Activated T-helper 1 cell treated with anti-CD3 and anti-CD28 coated beads, Interleukin-12 subunit alpha, Interleukin-12 subunit beta, Interleukin-2, Interleukin-4 antibody, amounts not matched to agents 30 ng/mL and 10 ng/mL and 1 ng/mL, durations not matched to agents 14 hours and 24 hours and 36 hours (primary cell): ENCODE measurements at regions of chr6 and their contacts with region 1.

Region 1: DNA sequence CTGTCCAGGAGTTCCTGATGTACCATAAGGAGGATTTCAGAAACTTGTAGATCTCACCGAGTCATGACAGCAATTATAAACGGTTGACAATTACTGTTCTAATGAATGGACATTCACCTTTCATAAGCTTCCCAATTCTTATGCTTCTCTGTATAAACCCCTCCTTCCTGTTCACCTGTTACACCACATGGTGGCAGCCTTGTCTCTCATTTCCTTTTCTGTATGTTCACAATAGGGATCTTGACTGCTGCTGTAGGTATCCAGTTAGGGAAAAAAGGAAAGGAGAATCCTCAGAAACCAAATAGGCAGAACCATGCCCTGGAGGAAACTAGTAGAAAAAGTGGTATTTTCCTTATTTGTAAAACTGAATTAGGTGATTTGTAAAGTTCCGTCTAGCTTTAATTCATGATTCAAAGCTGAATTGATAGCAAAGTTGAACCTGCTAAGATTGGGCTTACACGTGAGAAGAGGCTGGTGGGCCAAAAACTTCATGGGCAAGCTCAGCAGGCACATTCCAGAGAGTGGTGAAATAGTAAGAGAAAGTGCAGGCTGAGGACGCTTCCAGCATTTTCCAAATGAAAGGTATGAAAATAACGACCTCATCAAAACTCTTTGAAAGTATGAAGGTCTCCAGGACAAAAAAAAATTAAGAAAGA is 29.0 kb upstream of the TBPL1 start:
- DNase-seq: peak; percentile 42
- H3K4me3 Mint-ChIP-seq: no peak overlapping the region
- H3K27ac Mint-ChIP-seq: no peak overlapping the region
- H3K4me1 Mint-ChIP-seq: no peaks in the 10 kb centered on the region
- H3K27me3 Mint-ChIP-seq: peaks cover 22% of the 10 kb centered on the region

Region 2: DNA sequence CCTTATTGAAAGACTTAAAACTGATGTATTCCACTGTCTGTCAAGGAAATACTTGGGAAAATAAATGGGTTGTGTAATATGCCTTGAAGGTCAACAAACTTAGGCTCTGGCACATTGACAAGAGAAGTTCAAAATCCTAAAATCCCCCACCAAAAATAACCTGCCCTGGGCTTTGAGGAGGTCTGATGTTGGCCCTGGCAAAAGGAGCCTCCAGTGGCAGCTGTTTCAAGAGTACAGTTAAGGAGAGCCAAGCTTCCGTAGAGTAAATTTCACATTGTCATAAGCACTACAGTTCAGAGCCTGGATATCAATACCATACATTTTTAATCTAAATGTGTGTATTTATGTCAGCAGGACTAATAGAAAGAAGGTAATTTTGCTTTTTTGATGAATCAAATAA is 400.2 kb before region 1 on chr6:
- intact Hi-C with region 1: no loop called
- DNase-seq: no peak
- H3K4me3 Mint-ChIP-seq: no peak overlapping the region
- H3K27ac Mint-ChIP-seq: no peak overlapping the region
- H3K4me1 Mint-ChIP-seq: no peaks in the 10 kb centered on the region
- H3K27me3 Mint-ChIP-seq: no peaks in the 10 kb centered on the region

Region 3: GRCh38 chr6:133568970-133569889 is 354.8 kb before region 1 on chr6:
- intact Hi-C with region 1: loop called (anchors 1 kb)
- DNase-seq: no peak
- H3K4me3 Mint-ChIP-seq: peak overlapping the region; percentile 55
- H3K27ac Mint-ChIP-seq: no peak overlapping the region
- H3K4me1 Mint-ChIP-seq: peaks cover 6% of the 10 kb centered on the region
- H3K27me3 Mint-ChIP-seq: peaks cover 16% of the 10 kb centered on the region

Region 4: DNA sequence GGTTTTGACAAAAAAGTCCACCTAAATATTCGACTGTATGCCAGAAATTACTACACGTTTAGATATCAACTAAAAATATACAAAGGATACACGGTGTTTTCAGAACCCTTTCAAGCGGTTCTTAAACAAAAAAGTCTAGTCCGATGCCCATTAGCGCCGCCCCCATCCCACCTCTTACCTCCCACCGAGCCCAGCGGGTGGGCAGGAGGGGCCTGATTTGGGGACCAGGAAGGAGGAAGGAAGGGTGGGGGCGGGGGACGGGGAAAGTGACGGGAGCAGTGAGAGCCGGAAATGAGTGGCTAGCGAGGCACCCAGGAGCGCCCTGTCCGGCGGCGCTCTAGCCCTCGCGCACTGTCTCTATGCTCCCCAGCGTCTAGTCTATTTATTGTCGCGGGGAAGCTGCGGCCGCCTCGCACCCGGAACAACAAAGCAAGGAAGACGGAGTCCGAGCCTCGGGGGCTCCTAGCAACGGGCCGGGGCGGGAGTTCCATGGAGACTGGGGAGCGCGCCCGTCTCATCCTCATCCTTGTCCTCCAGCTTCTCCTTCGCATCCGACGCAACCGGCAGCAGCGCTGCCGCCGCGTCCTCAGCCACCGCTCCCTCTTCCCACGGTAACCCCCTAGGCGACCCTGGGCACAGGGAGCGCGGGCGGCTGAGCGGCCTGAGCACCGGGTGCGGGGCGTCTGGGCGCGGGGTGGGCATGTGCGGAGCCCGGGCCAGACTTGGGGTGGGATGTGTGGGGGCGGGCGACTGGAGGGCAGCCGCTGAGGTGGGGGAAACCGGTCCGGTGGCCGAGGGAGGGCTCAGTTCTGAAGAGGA is 29.0 kb after region 1 on chr6 and contains the start of gene TBPL1:
- intact Hi-C with region 1: loop called (anchors 1 kb)
- DNase-seq: peak; percentile 76
- H3K4me3 Mint-ChIP-seq: peak within 1 kb of the TSS; percentile 95
- H3K27ac Mint-ChIP-seq: peak within 1 kb of the TSS; percentile 90
- H3K4me1 Mint-ChIP-seq: peaks cover 48% of the 10 kb centered on the region
- H3K27me3 Mint-ChIP-seq: peaks cover 10% of the 10 kb centered on the region
- total RNA-seq, gene TBPL1: 40.5 and 42.2 TPM in 2 replicates

Region 5: DNA sequence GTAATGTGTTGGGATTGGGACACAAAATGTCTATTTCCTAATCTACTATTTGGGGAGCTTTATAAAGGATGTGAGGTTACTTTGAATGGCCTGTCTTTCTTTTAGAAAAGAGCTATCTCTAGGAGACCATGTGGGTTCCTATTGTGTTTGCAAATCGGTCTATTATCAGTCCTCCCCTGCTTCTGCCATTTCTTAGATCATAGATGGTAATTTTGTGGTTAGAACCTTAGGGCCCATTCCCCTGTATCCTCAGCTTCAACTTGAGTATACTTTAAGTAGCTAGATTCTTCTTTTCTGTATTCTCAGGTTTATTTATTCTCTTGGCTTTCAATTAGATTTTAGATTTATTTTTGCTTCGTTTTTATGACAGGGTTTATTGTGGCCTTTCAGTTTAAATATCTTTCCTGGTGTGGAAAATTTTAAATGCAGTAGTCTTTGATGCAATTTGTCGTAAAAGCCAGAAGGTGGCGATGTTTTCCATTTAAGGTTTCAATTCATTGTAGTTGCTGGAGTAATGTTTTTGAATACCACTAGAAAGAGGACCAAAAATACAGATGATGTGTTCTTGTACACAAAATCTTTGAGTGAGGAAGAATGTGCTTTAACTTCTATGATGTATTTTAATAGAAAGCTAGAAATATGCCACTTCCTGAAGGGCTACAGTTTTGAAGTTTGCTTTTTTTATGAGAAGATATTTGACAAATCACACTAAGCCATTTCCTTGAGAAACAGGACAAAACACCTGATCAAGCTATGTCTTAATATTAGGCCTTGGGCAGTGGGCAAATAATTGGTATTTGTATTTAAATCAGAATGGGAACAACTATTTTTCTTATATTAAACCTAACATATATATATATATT is 49.3 kb after region 1 on chr6:
- intact Hi-C with region 1: loop called (anchors 1 kb)
- DNase-seq: no peak
- H3K4me3 Mint-ChIP-seq: no peak overlapping the region
- H3K27ac Mint-ChIP-seq: no peak overlapping the region
- H3K4me1 Mint-ChIP-seq: peaks cover 17% of the 10 kb centered on the region
- H3K27me3 Mint-ChIP-seq: no peaks in the 10 kb centered on the region

Region 6: GRCh38 chr6:134047673-134048072 is 123.6 kb after region 1 on chr6:
- intact Hi-C with region 1: loop called (anchors 1 kb)
- DNase-seq: no peak
- H3K4me3 Mint-ChIP-seq: no peak overlapping the region
- H3K27ac Mint-ChIP-seq: no peak overlapping the region
- H3K4me1 Mint-ChIP-seq: peaks cover 9% of the 10 kb centered on the region
- H3K27me3 Mint-ChIP-seq: peaks cover 11% of the 10 kb centered on the region

Region 7: DNA sequence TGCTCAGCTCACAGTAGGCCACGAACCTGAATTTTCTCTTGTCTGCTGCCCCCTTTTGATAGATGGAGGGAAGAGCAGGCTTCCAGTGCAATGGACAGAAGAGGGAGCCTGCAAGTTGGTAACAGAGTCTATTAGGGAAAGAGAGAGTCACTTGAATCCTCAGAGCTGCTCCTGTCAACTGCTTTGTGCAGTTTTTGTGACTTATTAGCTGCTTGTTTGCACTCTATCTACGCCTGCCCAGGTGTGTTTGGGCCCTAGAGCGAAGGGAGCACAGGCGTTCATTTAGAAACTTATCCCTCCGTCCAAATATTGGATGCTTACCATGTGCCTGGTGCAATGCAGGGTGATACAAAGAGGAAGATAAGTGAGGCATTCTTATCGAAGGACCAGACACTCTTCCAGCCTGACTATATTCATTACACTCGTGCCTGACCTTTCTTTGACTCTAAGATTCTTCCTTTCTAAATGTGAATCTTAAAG is 139.9 kb after region 1 on chr6:
- intact Hi-C with region 1: loop called (anchors 1 kb)
- DNase-seq: peak; percentile 41
- H3K4me3 Mint-ChIP-seq: no peak overlapping the region
- H3K27ac Mint-ChIP-seq: no peak overlapping the region
- H3K4me1 Mint-ChIP-seq: no peaks in the 10 kb centered on the region
- H3K27me3 Mint-ChIP-seq: peaks cover 8% of the 10 kb centered on the region

Region 8: DNA sequence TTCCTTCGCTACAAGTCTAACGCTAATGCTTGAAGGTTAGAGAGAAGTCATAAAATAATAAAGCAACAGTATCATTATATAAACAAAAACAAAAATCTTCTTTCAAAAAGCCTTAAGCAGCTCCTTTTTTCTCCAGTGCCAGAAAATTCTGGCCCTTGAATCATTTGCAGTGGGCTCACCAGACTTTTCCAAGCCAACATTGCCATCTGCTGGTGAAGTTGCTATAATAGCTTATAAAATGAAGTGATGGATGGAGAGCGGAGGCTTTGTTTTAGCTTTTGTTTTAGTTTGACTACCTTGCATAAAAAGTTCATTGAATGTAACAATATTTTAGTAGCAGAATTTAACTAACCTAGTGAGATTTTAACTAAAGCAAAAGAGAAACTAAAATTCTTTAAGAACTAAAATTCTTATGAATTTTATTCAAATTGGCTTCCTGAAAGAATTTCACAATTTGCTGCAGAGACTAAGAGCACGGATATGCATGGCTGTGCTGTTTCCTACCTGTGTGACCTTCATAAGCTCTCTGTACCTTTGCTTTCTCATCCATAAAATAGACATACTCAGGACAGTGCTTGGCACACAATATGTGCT is 173.1 kb after region 1 on chr6:
- intact Hi-C with region 1: loop called (anchors 1 kb)
- DNase-seq: peak; percentile 38
- H3K4me3 Mint-ChIP-seq: no peak overlapping the region
- H3K27ac Mint-ChIP-seq: no peak overlapping the region
- H3K4me1 Mint-ChIP-seq: peaks cover 6% of the 10 kb centered on the region
- H3K27me3 Mint-ChIP-seq: peaks cover 22% of the 10 kb centered on the region

Region 9: DNA sequence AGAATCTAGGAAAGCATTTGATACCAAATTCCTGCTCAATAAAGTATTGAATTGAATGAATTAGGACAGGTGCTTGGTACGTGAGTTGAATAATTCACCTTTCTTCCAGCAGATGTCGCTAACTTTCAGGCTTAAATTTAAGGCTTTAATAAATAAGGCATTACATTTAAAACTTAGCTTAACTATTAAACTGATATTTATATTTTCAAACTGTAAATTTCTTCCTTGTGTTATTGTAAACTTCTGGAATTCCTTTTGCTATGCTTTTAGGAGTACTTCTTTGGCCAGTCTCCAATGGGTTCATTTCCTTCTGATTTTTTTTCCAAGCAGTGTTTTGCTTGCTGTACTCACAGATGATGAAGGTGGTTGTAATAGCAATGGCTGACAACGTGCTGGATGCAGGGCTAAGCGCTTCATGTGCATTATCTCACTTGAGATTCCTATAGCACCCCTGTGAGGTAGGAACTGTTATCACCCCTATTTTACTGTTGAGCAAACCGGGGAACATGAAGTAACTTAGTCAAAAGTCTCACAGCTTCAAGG is 199.7 kb after region 1 on chr6:
- intact Hi-C with region 1: no loop called
- DNase-seq: no peak
- H3K4me3 Mint-ChIP-seq: no peak overlapping the region
- H3K27ac Mint-ChIP-seq: no peak overlapping the region
- H3K4me1 Mint-ChIP-seq: no peaks in the 10 kb centered on the region
- H3K27me3 Mint-ChIP-seq: peaks cover 3% of the 10 kb centered on the region